ENCODE measurements at regions of chr14 and their contacts with region 1.

Region 1: DNA sequence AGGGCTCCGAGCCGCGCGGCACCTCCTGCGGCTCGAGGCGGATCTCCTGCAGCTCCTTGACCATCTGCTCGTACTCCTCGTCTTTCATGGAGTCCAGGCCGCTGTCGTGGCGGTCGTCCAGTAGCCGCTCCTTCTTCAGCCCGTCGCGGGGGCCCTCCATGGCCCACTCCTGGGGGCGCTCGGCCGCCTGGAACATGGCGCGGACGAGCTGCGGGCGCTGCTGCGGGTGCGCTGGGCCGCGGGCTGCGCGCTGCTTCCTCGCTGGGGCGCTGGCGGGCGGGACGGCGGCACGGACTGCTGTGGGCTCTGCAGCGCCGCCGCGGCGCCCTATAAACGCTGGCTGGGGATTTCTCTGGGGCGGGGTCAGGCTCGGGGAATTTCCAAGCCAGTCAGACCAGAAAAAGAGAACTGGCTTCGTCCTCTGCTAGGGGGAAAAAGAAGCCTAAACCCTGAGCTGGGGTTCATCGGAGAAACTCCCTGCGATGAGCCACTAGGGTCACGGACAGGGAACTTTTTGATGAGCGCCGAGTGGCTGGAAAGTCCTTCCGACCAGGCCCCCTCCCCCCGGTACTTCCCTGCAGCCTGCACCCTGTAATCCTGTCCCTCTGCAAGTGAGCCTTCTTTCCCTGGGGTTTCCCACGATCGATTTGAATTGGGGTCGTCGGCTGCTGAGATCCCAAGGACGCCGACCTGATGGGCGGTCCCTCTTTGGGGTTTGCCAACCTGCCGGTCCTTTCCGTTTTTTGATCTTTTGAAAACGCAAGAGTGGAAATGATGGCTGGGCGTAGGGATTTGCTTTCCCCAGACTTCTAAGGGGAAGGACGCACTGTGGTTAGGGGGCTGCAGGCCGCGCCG is at the start of gene NFKBIA:
- DNase-seq: peak; percentile 98
- ATAC-seq: peak; percentile 69
- H3K4me3 Mint-ChIP-seq: peak within 1 kb of the TSS; percentile 96
- H3K27ac Mint-ChIP-seq: peak within 1 kb of the TSS; percentile 96
- H3K4me1 Mint-ChIP-seq: peaks cover 54% of the 10 kb centered on the region
- H3K27me3 Mint-ChIP-seq: no peaks in the 10 kb centered on the region
- CTCF ChIP-seq: no peak
- total RNA-seq, gene NFKBIA: 480 and 515 TPM in 2 replicates

Region 2: GRCh38 chr14:34539407-34540180 is 865.1 kb before region 1 on chr14 and contains the start of gene EAPP:
- CTCF ChIA-PET with region 1: no interaction called
- POLR2A ChIA-PET with region 1: interaction called, 4 read pairs
- intact Hi-C with region 1: loop called (anchors 5 kb)
- DNase-seq: peak; percentile 86
- ATAC-seq: peak; percentile 99
- H3K4me3 Mint-ChIP-seq: peak within 1 kb of the TSS; percentile 99
- H3K27ac Mint-ChIP-seq: peak within 1 kb of the TSS; percentile 97
- H3K4me1 Mint-ChIP-seq: peaks cover 34% of the 10 kb centered on the region
- H3K27me3 Mint-ChIP-seq: no peaks in the 10 kb centered on the region
- CTCF ChIP-seq: no peak
- total RNA-seq, gene EAPP: 40.7 and 43.2 TPM in 2 replicates

Region 3: DNA sequence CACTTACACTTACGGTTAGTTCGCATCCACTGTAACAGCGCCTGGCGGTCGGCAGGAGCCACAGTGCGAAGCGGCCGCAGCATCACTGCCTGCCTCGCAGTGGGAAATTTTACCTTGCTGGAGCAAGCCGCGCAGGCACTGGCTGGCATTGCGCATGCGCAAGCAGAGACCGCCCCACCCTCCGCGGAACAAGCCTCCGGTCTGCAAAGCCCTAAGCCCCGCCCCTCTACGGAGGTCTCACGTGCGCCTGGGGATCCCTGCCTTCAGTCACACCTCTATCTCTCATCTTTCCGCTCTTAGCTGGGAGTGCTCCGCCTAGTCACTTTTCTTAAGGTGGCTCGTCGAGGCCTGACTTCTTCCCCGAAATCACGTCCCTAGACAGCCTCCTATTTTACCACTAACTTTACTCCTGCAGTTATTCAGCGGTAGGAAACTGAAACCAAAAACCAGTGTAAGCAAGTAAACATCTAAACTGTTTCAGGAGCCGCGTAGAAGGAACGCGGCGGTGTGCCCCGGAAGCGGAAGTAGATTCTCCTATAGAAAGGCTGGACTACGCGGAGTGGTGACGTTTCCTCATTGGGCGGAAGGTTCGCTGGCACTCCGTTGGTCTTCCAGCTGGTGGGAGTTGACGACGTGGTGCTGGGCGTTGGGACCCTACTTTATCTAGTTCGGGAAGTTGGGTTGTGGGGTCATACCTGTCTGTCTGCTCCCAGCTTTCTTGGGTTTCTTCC is 422.1 kb before region 1 on chr14 and contains the start of gene SRP54:
- CTCF ChIA-PET with region 1: no interaction called
- POLR2A ChIA-PET with region 1: interaction called, 30 read pairs
- intact Hi-C with region 1: loop called (anchors 1 kb)
- DNase-seq: peak; percentile 97
- ATAC-seq: peak; percentile 91
- H3K4me3 Mint-ChIP-seq: no peak within 1 kb of the TSS
- H3K27ac Mint-ChIP-seq: no peak within 1 kb of the TSS
- H3K4me1 Mint-ChIP-seq: peaks cover 22% of the 10 kb centered on the region
- H3K27me3 Mint-ChIP-seq: no peaks in the 10 kb centered on the region
- CTCF ChIP-seq: no peak
- total RNA-seq, gene SRP54: 51.2 and 54.7 TPM in 2 replicates

Region 4: GRCh38 chr14:35174342-35174741 is 230.3 kb before region 1 on chr14:
- CTCF ChIA-PET with region 1: no interaction called
- POLR2A ChIA-PET with region 1: no interaction called
- intact Hi-C with region 1: no loop called
- DNase-seq: no peak
- ATAC-seq: no peak
- H3K4me3 Mint-ChIP-seq: no peak overlapping the region
- H3K27ac Mint-ChIP-seq: no peak overlapping the region
- H3K4me1 Mint-ChIP-seq: no peaks in the 10 kb centered on the region
- H3K27me3 Mint-ChIP-seq: no peaks in the 10 kb centered on the region
- CTCF ChIP-seq: no peak

Region 5: GRCh38 chr14:35215110-35215876 is 189.4 kb before region 1 on chr14:
- CTCF ChIA-PET with region 1: interaction called, 12 read pairs
- POLR2A ChIA-PET with region 1: interaction called, 20 read pairs
- intact Hi-C with region 1: loop called (anchors 1 kb)
- DNase-seq: no peak
- ATAC-seq: no peak
- H3K4me3 Mint-ChIP-seq: no peak overlapping the region
- H3K27ac Mint-ChIP-seq: no peak overlapping the region
- H3K4me1 Mint-ChIP-seq: no peaks in the 10 kb centered on the region
- H3K27me3 Mint-ChIP-seq: no peaks in the 10 kb centered on the region
- CTCF ChIP-seq: no peak

Region 6: GRCh38 chr14:35285168-35286002 is 119.3 kb before region 1 on chr14:
- CTCF ChIA-PET with region 1: interaction called, 5 read pairs
- POLR2A ChIA-PET with region 1: interaction called, 211 read pairs
- intact Hi-C with region 1: loop called (anchors 1 kb)
- DNase-seq: no peak
- ATAC-seq: peak; percentile 81
- H3K4me3 Mint-ChIP-seq: peak overlapping the region; percentile 80
- H3K27ac Mint-ChIP-seq: peak overlapping the region; percentile 90
- H3K4me1 Mint-ChIP-seq: peaks cover 52% of the 10 kb centered on the region
- H3K27me3 Mint-ChIP-seq: no peaks in the 10 kb centered on the region
- CTCF ChIP-seq: no peak

Region 7: DNA sequence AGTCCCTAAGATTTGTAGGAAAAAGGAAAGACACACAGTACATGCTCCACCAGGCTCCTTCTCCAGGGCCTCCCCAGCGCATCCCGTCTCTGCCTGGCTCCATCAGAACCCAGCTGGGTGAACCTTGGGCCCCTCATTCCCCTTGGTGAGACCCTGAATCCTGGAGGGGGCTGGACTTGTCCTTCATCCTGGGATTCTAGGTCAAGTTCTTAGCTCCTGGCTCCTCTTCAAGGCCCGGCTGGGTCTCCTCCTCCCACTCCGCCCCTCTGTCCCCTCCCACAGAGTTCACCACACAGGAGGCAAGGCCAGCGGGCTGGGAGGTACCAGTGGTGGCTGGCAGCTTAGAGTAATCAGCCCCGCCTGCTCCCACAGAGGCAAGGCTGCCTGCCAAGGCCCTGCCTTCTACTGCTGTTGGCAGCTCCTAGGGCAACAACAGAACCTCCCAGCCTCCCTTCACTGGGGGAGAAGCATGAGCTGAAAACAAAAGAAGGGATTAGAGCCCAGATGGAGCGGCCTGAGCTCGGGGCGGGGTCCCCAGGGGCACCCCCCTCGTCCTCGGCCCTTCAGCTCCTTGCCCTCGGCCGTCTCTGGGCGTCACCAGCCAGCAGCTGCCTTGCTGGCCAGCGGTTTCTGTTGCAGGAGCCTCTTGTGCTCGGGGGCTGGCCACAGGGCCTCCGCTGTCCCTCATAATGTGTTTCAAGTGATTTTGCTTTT is 63.1 kb before region 1 on chr14:
- CTCF ChIA-PET with region 1: no interaction called
- POLR2A ChIA-PET with region 1: interaction called, 35 read pairs
- intact Hi-C with region 1: loop called (anchors 2 kb)
- DNase-seq: no peak
- ATAC-seq: peak; percentile 51
- H3K4me3 Mint-ChIP-seq: no peak overlapping the region
- H3K27ac Mint-ChIP-seq: no peak overlapping the region
- H3K4me1 Mint-ChIP-seq: peaks cover 32% of the 10 kb centered on the region
- H3K27me3 Mint-ChIP-seq: no peaks in the 10 kb centered on the region
- CTCF ChIP-seq: no peak

Region 8: DNA sequence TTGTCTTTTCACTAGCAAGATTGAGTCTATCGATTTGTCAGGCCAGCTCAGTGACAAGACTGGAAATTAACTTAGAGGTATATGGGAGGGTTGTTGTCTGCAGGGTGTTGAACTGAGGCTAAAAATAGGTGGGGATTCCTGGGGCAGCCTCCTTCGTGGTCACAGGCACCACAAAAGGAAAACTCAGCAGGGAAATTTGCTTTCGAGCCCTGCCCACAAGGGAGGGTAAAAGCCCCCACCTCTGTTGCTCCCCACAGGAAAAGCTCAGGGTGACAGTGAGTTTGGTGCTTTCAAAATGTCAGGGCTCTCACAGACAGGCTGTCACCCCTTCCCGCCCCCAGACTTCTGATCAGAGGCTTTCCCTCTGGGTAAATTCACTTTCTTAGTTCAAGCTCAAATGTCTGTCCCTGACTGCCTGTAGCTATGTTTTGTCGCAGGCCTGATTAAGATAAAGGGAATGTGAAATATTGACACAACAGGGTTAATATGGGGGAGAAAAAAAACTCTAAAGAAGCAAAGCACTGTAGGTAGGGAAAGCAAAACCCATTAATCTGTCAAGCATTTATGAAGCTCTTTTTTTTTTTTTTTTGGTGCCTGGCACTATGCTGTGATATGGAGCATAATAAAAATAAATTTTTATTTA is 11.6 kb after region 1 on chr14:
- CTCF ChIA-PET with region 1: no interaction called
- POLR2A ChIA-PET with region 1: interaction called, 61 read pairs
- intact Hi-C with region 1: no loop called
- DNase-seq: no peak
- ATAC-seq: peak; percentile 63
- H3K4me3 Mint-ChIP-seq: peak overlapping the region; percentile 65
- H3K27ac Mint-ChIP-seq: peak overlapping the region; percentile 59
- H3K4me1 Mint-ChIP-seq: peaks cover 29% of the 10 kb centered on the region
- H3K27me3 Mint-ChIP-seq: no peaks in the 10 kb centered on the region
- CTCF ChIP-seq: no peak

Region 9: DNA sequence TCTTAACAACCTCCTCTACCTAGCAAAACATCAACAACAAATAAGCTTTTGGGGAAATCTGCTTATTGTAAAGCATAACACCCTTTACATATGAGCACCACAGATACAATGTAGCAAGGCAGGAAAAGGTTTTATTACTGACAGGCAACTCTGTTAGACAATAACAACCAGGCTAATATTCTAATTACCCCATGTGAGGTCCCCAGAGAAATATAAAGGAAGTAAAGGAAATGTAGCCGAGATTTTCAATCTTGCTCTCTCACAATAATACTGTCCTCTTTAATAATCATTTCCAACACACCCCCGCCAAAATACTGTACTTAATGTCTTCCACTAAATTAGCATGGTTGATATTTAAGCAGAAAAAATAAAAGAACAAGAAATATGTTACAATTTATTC is 115.3 kb after region 1 on chr14:
- CTCF ChIA-PET with region 1: no interaction called
- POLR2A ChIA-PET with region 1: no interaction called
- intact Hi-C with region 1: no loop called
- DNase-seq: no peak
- ATAC-seq: no peak
- H3K4me3 Mint-ChIP-seq: no peak overlapping the region
- H3K27ac Mint-ChIP-seq: no peak overlapping the region
- H3K4me1 Mint-ChIP-seq: peaks cover 4% of the 10 kb centered on the region
- H3K27me3 Mint-ChIP-seq: peaks cover 15% of the 10 kb centered on the region
- CTCF ChIP-seq: no peak

Measured in activated B cell treated with CpG ODN at 0.5 μM for 24 hours (primary cell).